ENCODE measurements at regions of chr13 and their contacts with region 1.

Region 1: DNA sequence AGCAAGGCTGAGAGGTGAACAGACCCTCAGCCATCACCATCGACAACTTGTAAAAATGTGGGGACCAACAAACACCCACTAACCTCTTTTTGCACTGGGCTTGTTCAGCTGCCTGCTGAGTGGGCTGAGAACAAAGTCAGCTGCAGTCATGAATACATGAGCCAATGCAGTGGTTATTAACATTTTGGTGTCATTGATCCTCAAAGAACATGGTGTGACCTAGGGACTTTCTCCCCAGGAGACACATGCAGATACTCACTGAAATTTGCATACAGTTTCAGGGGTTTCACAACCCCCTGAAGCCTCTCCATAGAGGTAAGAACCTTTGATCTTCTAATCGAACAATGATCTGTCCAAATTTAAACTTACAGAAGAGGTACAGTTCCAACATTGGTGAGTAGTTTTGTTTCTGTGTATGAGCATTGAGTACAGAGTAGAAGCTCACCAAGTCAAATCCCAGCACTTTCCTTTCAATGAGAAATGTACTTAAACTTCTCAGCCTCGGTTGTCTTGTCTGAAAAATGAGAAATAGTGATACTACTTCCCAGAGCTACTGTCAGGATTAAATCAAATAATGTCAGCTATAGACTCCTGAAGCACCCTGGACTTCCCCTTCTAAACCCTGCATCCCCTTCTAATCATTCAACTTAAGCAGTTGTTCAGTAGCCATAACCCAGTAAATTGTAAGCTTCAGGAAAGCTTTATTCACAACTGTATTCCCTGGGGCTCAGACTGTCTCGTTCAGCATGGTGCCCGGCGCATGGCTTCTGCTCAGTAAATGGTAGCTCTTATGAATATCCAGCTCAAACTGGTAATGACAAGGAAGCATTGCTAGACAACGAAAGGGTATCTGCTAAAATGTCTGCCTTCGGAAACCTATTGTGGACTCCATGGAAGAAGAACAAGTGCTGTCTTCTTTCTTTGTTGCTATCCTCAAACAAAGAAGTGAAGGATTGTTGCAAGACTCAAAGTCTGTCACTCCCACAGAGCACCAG is 148.7 kb downstream of the FOXO1 start:
- DNase-seq: peak; percentile 57
- H3K4me3 Mint-ChIP-seq: peak overlapping the region; percentile 23
- H3K27ac Mint-ChIP-seq: peak overlapping the region; percentile 87
- H3K4me1 Mint-ChIP-seq: peaks cover 78% of the 10 kb centered on the region
- H3K27me3 Mint-ChIP-seq: no peaks in the 10 kb centered on the region

Region 2: DNA sequence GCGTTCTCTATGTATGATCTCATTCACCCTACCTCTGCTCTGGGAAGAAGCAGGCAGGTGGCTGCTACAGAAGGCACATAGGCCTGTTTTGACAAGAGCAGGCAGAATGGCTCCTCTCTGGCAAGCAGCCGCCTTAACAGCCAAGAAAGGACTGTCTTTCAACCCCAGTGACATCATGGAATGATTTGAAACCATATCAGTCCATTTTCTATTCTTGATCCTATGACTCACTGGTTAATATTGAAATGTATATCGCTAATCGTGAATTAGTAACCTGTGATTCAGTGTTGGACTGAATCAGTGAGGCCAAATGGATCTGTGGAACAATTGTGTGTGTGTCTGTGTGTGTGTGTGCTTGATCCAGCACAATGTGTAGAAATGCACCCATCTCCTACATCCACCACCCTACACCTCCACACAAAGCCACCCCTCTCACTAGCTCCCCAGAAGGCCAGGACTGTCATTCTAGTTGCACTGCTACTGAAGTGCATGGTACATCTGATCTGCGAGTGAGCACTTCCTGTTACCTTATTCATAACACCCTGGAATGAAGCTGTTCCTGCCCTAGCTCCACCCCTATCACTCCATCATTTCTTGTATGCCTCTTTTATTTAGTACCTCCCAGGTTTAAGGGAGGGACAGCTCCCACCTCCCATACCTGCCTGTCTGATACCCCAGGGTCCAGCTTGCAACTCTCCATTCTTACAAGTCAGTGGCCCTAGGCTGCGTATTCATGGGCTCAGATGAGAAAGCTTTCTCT is 311.4 kb before region 1 on chr13:
- CTCF ChIA-PET with region 1: no interaction called
- intact Hi-C with region 1: loop called (anchors 1 kb)
- DNase-seq: peak; percentile 74
- H3K4me3 Mint-ChIP-seq: peak overlapping the region; percentile 64
- H3K27ac Mint-ChIP-seq: peak overlapping the region; percentile 100
- H3K4me1 Mint-ChIP-seq: peaks cover 73% of the 10 kb centered on the region
- H3K27me3 Mint-ChIP-seq: no peaks in the 10 kb centered on the region

Region 3: DNA sequence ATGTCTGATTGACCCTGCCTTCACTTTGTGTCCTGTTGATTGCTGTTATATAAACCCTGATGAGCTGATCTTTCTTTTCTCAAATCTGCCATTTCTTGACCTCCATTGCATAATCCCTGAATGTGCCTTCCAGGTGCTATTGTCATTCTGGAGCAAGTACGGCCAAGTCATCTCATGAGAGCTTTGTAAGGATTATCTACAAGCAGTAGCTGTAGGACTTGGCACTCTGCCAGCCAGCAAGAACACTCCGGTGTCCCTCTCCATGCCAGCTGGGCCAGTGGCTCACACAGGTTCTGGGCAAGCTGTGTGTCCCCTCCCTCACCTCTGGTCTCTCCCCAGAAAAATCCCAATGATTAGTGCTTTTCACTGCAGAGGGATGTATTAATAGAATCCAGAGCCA is 199.4 kb before region 1 on chr13:
- CTCF ChIA-PET with region 1: no interaction called
- intact Hi-C with region 1: loop called (anchors 2 kb)
- DNase-seq: peak; percentile 23
- H3K4me3 Mint-ChIP-seq: no peak overlapping the region
- H3K27ac Mint-ChIP-seq: no peak overlapping the region
- H3K4me1 Mint-ChIP-seq: peaks cover 64% of the 10 kb centered on the region
- H3K27me3 Mint-ChIP-seq: no peaks in the 10 kb centered on the region

Region 4: GRCh38 chr13:40422588-40423235 is 95.1 kb before region 1 on chr13:
- CTCF ChIA-PET with region 1: no interaction called
- intact Hi-C with region 1: no loop called
- DNase-seq: peak; percentile 46
- H3K4me3 Mint-ChIP-seq: no peak overlapping the region
- H3K27ac Mint-ChIP-seq: no peak overlapping the region
- H3K4me1 Mint-ChIP-seq: peaks cover 26% of the 10 kb centered on the region
- H3K27me3 Mint-ChIP-seq: no peaks in the 10 kb centered on the region

Region 5: GRCh38 chr13:40494513-40494912 is 23.3 kb before region 1 on chr13:
- CTCF ChIA-PET with region 1: interaction called, 4 read pairs
- intact Hi-C with region 1: loop called (anchors 1 kb)
- DNase-seq: no peak
- H3K4me3 Mint-ChIP-seq: peak overlapping the region; percentile 57
- H3K27ac Mint-ChIP-seq: peak overlapping the region; percentile 77
- H3K4me1 Mint-ChIP-seq: peaks cover 76% of the 10 kb centered on the region
- H3K27me3 Mint-ChIP-seq: no peaks in the 10 kb centered on the region

Region 6: DNA sequence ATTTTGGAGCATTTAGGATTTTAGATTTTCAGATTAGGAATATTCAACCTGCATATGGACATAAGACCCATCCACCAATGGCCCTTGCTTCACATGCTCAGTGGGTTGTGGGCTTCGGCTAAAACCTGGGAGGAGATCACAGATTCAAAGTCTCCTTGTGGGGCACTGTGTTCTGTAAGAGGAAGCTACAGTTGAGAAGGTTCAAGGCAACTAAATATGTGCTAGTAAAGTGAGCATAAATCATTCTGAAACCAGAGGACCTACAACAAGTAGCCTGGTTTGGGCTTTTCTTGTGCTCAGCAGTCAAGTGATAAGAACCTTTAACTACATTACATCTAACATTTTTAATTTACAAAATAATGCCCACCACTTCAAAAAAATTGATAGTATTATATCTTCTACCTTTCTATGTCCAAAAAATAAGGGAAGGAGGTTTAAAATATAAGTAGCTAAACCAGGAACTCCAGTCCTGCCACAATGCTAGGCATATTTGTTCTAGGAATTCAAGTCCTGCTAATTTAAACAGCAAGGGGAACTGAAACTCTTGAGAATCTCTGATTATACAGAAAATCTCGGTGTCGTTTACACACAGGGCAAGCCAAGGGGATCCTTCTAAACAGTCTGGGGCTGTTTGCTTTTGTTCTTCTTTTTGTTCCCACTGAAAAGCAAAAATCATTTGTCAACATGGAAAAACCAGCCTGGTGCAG is 112.0 kb after region 1 on chr13:
- CTCF ChIA-PET with region 1: no interaction called
- intact Hi-C with region 1: no loop called
- DNase-seq: no peak
- H3K4me3 Mint-ChIP-seq: no peak overlapping the region
- H3K27ac Mint-ChIP-seq: peak overlapping the region; percentile 73
- H3K4me1 Mint-ChIP-seq: peaks cover 84% of the 10 kb centered on the region
- H3K27me3 Mint-ChIP-seq: no peaks in the 10 kb centered on the region

Region 7: DNA sequence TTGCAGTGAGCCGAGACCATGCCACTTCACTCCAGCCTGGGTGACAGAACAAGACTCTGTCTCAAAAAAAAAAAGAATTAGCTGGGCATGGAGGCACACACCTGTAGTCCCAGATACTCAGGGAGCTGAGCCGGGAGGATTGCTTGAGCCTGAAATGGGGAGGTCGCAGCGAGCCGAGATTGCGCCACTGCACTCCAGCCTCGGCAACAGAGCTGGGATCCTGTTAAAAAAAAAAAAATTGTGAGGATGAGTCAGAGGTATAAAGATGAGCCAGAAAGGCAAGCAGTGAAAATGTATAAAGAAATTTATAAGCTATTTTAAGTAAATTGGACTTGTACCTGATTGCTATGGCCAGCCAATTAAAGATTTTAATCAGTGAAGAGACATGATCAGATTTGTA is 593.7 kb after region 1 on chr13:
- CTCF ChIA-PET with region 1: no interaction called
- intact Hi-C with region 1: no loop called
- DNase-seq: no peak
- H3K4me3 Mint-ChIP-seq: no peak overlapping the region
- H3K27ac Mint-ChIP-seq: no peak overlapping the region
- H3K4me1 Mint-ChIP-seq: no peaks in the 10 kb centered on the region
- H3K27me3 Mint-ChIP-seq: no peaks in the 10 kb centered on the region

Measured in activated naive CD4-positive, alpha-beta T cell treated with anti-CD3 and anti-CD28 coated beads for 36 hours (primary cell).